ENCODE measurements at regions of chr3 and their contacts with region 1.

Region 1: GRCh38 chr3:122679085-122679881 is 1.4 kb upstream of the PARP14 start:
- DNase-seq: peak; percentile 78 to 79
- H3K4me3 ChIP-seq: no peak overlapping the region
- H3K4me3 Mint-ChIP-seq: peak overlapping the region; percentile 89
- H3K27ac Mint-ChIP-seq: peak overlapping the region; percentile 78
- H3K4me1 ChIP-seq: peaks cover 5% of the 10 kb centered on the region; the same call in 1 of the 2 replicates
- H3K4me1 Mint-ChIP-seq: peaks cover 24% of the 10 kb centered on the region
- H3K27me3 ChIP-seq: no peaks in the 10 kb centered on the region
- H3K27me3 Mint-ChIP-seq: no peaks in the 10 kb centered on the region
- CTCF ChIP-seq: peak; percentile 68 to 76

Region 2: GRCh38 chr3:122383771-122384697 is 295.2 kb before region 1 on chr3 and contains the start of gene FAM162A:
- CTCF ChIA-PET with region 1: interaction called, 7 read pairs
- POLR2A ChIA-PET with region 1: no interaction called
- intact Hi-C with region 1: loop called (anchors 5 kb)
- DNase-seq: peak; percentile 95 to 97
- H3K4me3 ChIP-seq: peak within 1 kb of the TSS; percentile 77
- H3K4me3 Mint-ChIP-seq: peak within 1 kb of the TSS; percentile 97
- H3K27ac Mint-ChIP-seq: peak within 1 kb of the TSS; percentile 95
- H3K4me1 ChIP-seq: peaks cover 7% of the 10 kb centered on the region; the same call in 1 of the 2 replicates
- H3K4me1 Mint-ChIP-seq: no peaks in the 10 kb centered on the region
- H3K27me3 ChIP-seq: no peaks in the 10 kb centered on the region
- H3K27me3 Mint-ChIP-seq: no peaks in the 10 kb centered on the region
- CTCF ChIP-seq: peak; percentile 42 to 74
- total RNA-seq, gene FAM162A: 35.8 and 37.4 TPM in 2 replicates

Region 3: GRCh38 chr3:122392868-122393844 is 286.1 kb before region 1 on chr3:
- CTCF ChIA-PET with region 1: interaction called, 3 read pairs
- POLR2A ChIA-PET with region 1: no interaction called
- intact Hi-C with region 1: loop called (anchors 1 kb)
- DNase-seq: peak in 1 of 2 experiments; percentile 39
- H3K4me3 ChIP-seq: no peak overlapping the region
- H3K4me3 Mint-ChIP-seq: no peak overlapping the region
- H3K27ac Mint-ChIP-seq: no peak overlapping the region
- H3K4me1 ChIP-seq: 0 out of 2 replicates have a peak, but pooled peaks cover 4% of the 10 kb centered on the region
- H3K4me1 Mint-ChIP-seq: no peaks in the 10 kb centered on the region
- H3K27me3 ChIP-seq: no peaks in the 10 kb centered on the region
- H3K27me3 Mint-ChIP-seq: no peaks in the 10 kb centered on the region
- CTCF ChIP-seq: peak; percentile 54 to 73

Region 4: DNA sequence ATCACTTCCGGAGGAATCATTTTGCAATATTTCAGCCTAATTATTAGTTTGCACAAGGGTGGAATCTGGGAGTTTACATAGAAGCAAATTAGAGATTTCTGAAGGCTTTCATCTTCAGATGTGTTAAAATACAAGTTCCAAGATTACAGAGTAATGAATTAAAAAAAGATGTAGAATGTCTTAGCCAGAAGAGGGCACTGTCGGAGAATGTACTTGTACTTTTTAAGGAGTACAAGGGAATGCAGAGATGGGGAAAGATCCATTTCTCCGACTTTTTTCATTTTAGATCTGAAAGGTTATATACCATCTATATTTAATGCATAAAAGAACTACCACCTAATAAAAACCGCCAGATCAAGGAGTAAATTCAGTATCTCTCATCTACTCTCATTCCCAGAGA is 220.3 kb before region 1 on chr3:
- CTCF ChIA-PET with region 1: no interaction called
- POLR2A ChIA-PET with region 1: no interaction called
- intact Hi-C with region 1: loop called (anchors 1 kb)
- DNase-seq: peak in 1 of 2 experiments; percentile 29
- H3K4me3 ChIP-seq: no peak overlapping the region
- H3K4me3 Mint-ChIP-seq: no peak overlapping the region
- H3K27ac Mint-ChIP-seq: no peak overlapping the region
- H3K4me1 ChIP-seq: peaks cover 10% of the 10 kb centered on the region; the same call in 1 of the 2 replicates
- H3K4me1 Mint-ChIP-seq: peaks cover 13% of the 10 kb centered on the region
- H3K27me3 ChIP-seq: no peaks in the 10 kb centered on the region
- H3K27me3 Mint-ChIP-seq: no peaks in the 10 kb centered on the region
- CTCF ChIP-seq: peak; percentile 39 to 42

Region 5: GRCh38 chr3:122564155-122564912 is 114.9 kb before region 1 on chr3 and contains the starts of genes DTX3L and PARP9:
- CTCF ChIA-PET with region 1: interaction called, 10 read pairs
- POLR2A ChIA-PET with region 1: no interaction called
- intact Hi-C with region 1: loop called (anchors 1 kb)
- DNase-seq: peak; percentile 82 to 85
- H3K4me3 ChIP-seq: peak within 1 kb of the TSS; percentile 65
- H3K4me3 Mint-ChIP-seq: peak within 1 kb of the TSS; percentile 83
- H3K27ac Mint-ChIP-seq: peak within 1 kb of the TSS; percentile 86
- H3K4me1 ChIP-seq: 0 out of 2 replicates have a peak, but pooled peaks cover 3% of the 10 kb centered on the region
- H3K4me1 Mint-ChIP-seq: peaks cover 8% of the 10 kb centered on the region
- H3K27me3 ChIP-seq: no peaks in the 10 kb centered on the region
- H3K27me3 Mint-ChIP-seq: no peaks in the 10 kb centered on the region
- CTCF ChIP-seq: no peak
- total RNA-seq, gene DTX3L: 17.3 and 21.9 TPM in 2 replicates
- total RNA-seq, gene PARP9: 15.8 and 16.1 TPM in 2 replicates

Region 6: DNA sequence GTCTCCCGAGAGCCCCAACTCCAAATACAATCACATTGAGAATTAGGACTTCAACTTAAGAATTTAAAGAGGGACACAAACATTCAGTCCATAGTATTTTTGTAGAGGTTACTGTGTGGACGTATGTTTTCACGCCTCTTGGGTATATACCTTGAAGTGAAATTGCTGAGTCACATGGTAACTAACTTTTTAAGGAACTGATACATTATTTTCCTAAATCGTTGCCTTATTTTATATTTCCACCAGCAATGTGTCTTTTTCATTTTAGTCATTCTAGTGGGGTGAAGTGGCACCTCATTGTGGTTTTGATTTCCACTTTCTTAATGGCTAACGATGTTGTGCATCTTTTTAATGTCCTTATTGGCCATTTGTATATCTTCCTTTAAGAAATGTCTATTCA is 90.0 kb before region 1 on chr3:
- CTCF ChIA-PET with region 1: no interaction called
- POLR2A ChIA-PET with region 1: no interaction called
- intact Hi-C with region 1: no loop called
- DNase-seq: no peak
- H3K4me3 ChIP-seq: no peak overlapping the region
- H3K4me3 Mint-ChIP-seq: no peak overlapping the region
- H3K27ac Mint-ChIP-seq: no peak overlapping the region
- H3K4me1 ChIP-seq: no peaks in the 10 kb centered on the region
- H3K4me1 Mint-ChIP-seq: no peaks in the 10 kb centered on the region
- H3K27me3 ChIP-seq: no peaks in the 10 kb centered on the region
- H3K27me3 Mint-ChIP-seq: no peaks in the 10 kb centered on the region
- CTCF ChIP-seq: no peak

Region 7: GRCh38 chr3:122754929-122755328 is 75.6 kb after region 1 on chr3:
- CTCF ChIA-PET with region 1: interaction called, 5 read pairs
- POLR2A ChIA-PET with region 1: no interaction called
- intact Hi-C with region 1: loop called (anchors 5 kb)
- DNase-seq: peak; percentile 71 to 76
- H3K4me3 ChIP-seq: no peak overlapping the region
- H3K4me3 Mint-ChIP-seq: peak overlapping the region; percentile 43
- H3K27ac Mint-ChIP-seq: peak overlapping the region; percentile 93
- H3K4me1 ChIP-seq: peaks cover 43% of the 10 kb centered on the region
- H3K4me1 Mint-ChIP-seq: peaks cover 35% of the 10 kb centered on the region
- H3K27me3 ChIP-seq: no peaks in the 10 kb centered on the region
- H3K27me3 Mint-ChIP-seq: no peaks in the 10 kb centered on the region
- CTCF ChIP-seq: peak; percentile 75 to 82

Region 8: GRCh38 chr3:122793568-122794416 is 114.5 kb after region 1 on chr3 and contains the start of gene HSPBAP1:
- CTCF ChIA-PET with region 1: no interaction called
- POLR2A ChIA-PET with region 1: no interaction called
- intact Hi-C with region 1: loop called (anchors 5 kb)
- DNase-seq: peak; percentile 91 to 92
- H3K4me3 ChIP-seq: peak within 1 kb of the TSS; percentile 95
- H3K4me3 Mint-ChIP-seq: no peak within 1 kb of the TSS
- H3K27ac Mint-ChIP-seq: peak within 1 kb of the TSS; percentile 72
- H3K4me1 ChIP-seq: peaks cover 15% of the 10 kb centered on the region
- H3K4me1 Mint-ChIP-seq: peaks cover 8% of the 10 kb centered on the region
- H3K27me3 ChIP-seq: no peaks in the 10 kb centered on the region
- H3K27me3 Mint-ChIP-seq: no peaks in the 10 kb centered on the region
- CTCF ChIP-seq: peak in 1 of 2 experiments; percentile 4
- total RNA-seq, gene HSPBAP1: 9.9 and 13.1 TPM in 2 replicates